ENCODE measurements at regions of chr1 and their contacts with region 1.

Region 1: GRCh38 chr1:174743654-174744561 is 255.8 kb upstream of the CACYBP start:
- DNase-seq: peak; percentile 42
- ATAC-seq: no peak
- H3K4me3 ChIP-seq: no peak overlapping the region
- H3K27ac ChIP-seq: no peak overlapping the region
- H3K4me1 ChIP-seq: no peaks in the 10 kb centered on the region
- H3K27me3 ChIP-seq: no peaks in the 10 kb centered on the region
- CTCF ChIP-seq: peak; percentile 66

Region 2: DNA sequence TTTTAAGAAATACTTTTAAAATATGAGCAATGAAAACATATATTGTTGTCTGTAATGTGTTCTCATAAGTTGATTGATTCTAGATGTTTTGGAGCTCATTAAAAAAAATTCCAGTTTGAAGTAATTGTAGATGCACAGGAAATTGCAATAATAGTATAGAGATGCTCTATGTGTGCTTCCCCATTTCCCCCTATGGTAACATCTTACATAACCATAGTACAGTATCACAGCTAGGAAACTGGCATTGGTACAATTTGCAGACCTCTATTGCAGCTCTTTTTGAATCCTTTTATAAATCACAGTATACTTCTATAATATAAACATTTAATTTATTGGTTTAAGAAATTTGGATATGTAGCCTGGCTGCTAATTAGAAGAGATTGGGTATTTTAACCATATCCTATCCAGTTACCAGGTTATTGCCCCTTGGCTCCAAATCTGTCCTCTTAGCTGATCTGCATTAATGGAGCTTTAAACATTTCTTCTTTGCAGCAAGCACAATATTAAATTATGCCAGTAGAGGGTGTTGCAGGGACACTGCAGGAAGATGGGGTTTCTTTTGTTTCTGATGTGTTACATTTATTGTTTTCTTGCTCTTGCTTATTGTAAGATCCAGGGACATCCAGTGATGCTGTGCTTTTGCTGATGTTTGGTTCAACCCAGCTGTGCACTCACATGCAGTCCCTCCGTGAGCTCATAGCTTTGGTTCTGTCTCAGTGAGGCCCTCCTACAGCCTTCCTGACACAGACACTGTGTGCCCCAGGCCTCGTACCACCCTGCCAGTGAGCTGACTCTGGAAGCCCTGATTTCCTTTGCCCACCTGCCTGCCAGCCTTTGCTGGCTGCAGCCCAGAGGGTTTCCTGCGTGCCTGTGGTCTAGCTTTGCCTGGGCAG is 481.3 kb before region 1 on chr1:
- CTCF ChIA-PET with region 1: interaction called, 9 read pairs
- POLR2A ChIA-PET with region 1: no interaction called
- intact Hi-C with region 1: loop called (anchors 1 kb)
- DNase-seq: peak; percentile 61
- ATAC-seq: peak; percentile 27; the same call in 1 of the 2 replicates
- H3K4me3 ChIP-seq: no peak overlapping the region
- H3K27ac ChIP-seq: no peak overlapping the region
- H3K4me1 ChIP-seq: no peaks in the 10 kb centered on the region
- H3K27me3 ChIP-seq: no peaks in the 10 kb centered on the region
- CTCF ChIP-seq: peak; percentile 68

Region 3: GRCh38 chr1:174726167-174726879 is 17.6 kb before region 1 on chr1:
- CTCF ChIA-PET with region 1: interaction called, 10 read pairs
- POLR2A ChIA-PET with region 1: no interaction called
- intact Hi-C with region 1: no loop called
- DNase-seq: peak; percentile 37
- ATAC-seq: peak; percentile 43; the same call in 1 of the 2 replicates
- H3K4me3 ChIP-seq: no peak overlapping the region
- H3K27ac ChIP-seq: no peak overlapping the region
- H3K4me1 ChIP-seq: no peaks in the 10 kb centered on the region
- H3K27me3 ChIP-seq: no peaks in the 10 kb centered on the region
- CTCF ChIP-seq: peak; percentile 61

Region 4: DNA sequence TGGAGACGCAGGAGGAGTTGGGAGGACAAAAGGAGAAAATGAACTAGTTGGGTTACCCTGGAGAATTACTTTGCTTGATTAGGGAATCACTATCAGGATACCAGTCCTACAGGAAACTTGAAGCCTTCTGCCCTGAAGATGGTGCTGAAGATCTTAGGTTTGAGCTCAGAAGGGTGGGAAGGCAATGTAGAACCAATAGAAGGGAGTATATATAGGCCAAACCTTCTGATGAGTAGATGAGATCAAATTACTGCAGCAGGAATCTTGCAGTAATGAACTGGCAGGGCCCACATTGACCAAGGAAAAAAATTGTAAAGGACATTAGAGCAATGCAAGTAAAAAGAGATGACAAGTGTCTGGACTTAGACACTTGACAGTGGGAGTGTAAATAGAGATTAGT is 139.5 kb after region 1 on chr1:
- CTCF ChIA-PET with region 1: no interaction called
- POLR2A ChIA-PET with region 1: no interaction called
- intact Hi-C with region 1: no loop called
- DNase-seq: peak; percentile 65
- ATAC-seq: peak; percentile 92
- H3K4me3 ChIP-seq: no peak overlapping the region
- H3K27ac ChIP-seq: no peak overlapping the region
- H3K4me1 ChIP-seq: no peaks in the 10 kb centered on the region
- H3K27me3 ChIP-seq: no peaks in the 10 kb centered on the region
- CTCF ChIP-seq: peak; percentile 50

Measured in PC-3 (cell line).